ENCODE measurements at regions of chr17 and their contacts with region 1.

Region 1: GRCh38 chr17:44533533-44534246 is 23.6 kb upstream of the FZD2 start:
- DNase-seq: peak; percentile 73 to 92 (median 85)
- ATAC-seq: peak; percentile 93
- H3K4me3 ChIP-seq: no peak overlapping the region
- H3K4me3 Mint-ChIP-seq: no peak overlapping the region
- H3K27ac ChIP-seq: no peak overlapping the region
- H3K27ac Mint-ChIP-seq: no peak overlapping the region
- H3K4me1 ChIP-seq: peaks cover 8% of the 10 kb centered on the region
- H3K4me1 Mint-ChIP-seq: peaks cover 8% of the 10 kb centered on the region
- H3K27me3 ChIP-seq: no peaks in the 10 kb centered on the region
- H3K27me3 Mint-ChIP-seq: peaks cover 2% of the 10 kb centered on the region
- CTCF ChIP-seq: peak; percentile 93

Region 2: GRCh38 chr17:44522883-44523671 is 10.6 kb before region 1 on chr17:
- CTCF ChIA-PET with region 1: interaction called, 14 read pairs
- POLR2A ChIA-PET with region 1: no interaction called
- intact Hi-C with region 1: no loop called
- DNase-seq: peak in 7 of 9 experiments; percentile 20 to 58 (median 50)
- ATAC-seq: no peak
- H3K4me3 ChIP-seq: no peak overlapping the region
- H3K4me3 Mint-ChIP-seq: no peak overlapping the region
- H3K27ac ChIP-seq: no peak overlapping the region
- H3K27ac Mint-ChIP-seq: no peak overlapping the region
- H3K4me1 ChIP-seq: no peaks in the 10 kb centered on the region
- H3K4me1 Mint-ChIP-seq: no peaks in the 10 kb centered on the region
- H3K27me3 ChIP-seq: no peaks in the 10 kb centered on the region
- H3K27me3 Mint-ChIP-seq: peaks cover 16% of the 10 kb centered on the region
- CTCF ChIP-seq: no peak

Region 3: DNA sequence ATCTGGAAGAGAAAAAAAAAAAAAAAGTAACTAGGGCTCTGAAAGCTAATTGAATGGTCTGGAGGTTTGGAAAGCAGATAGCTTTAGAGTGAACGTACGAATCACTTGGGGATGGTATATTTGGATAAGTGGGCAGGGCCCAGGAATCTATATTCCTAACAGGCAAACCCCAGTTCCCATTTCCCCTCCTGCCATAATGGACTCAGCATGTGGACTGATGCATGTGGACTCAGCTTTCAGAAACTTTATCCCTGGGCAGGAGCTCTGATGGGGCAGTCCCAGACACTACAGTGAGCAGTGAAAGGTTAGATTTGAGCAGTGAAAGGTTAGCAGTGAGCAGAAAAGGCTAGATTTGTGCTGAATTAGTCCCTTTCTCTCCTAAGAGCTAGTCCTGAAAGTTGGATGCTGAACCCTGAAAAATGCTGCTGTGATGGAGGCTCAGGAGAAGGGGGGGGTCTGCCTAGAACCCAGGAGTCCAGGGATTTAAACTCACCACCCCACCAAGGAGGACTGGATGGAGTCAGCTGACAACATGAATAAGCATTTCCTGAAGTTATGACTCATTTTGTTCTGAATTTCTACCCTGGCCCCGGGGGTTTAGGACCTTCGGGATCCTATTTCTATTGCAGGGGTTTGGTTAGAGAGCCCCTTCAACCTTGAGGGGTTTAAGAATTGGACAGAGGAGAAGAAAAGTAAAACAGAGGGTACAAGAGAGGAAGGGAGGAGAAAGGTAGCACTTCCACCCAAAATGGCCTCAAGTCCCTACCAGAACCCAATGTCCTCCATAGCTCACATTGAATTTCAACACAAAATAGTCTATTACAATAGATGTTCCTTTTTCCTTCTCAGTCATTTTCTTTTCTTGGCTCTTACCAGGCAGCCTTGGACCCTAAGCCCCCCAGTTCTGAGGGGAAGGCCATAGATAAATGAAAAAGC is 13.2 kb after region 1 on chr17:
- CTCF ChIA-PET with region 1: interaction called, 13 read pairs
- POLR2A ChIA-PET with region 1: no interaction called
- intact Hi-C with region 1: no loop called
- DNase-seq: no peak
- ATAC-seq: no peak
- H3K4me3 ChIP-seq: no peak overlapping the region
- H3K4me3 Mint-ChIP-seq: no peak overlapping the region
- H3K27ac ChIP-seq: no peak overlapping the region
- H3K27ac Mint-ChIP-seq: no peak overlapping the region
- H3K4me1 ChIP-seq: no peaks in the 10 kb centered on the region
- H3K4me1 Mint-ChIP-seq: no peaks in the 10 kb centered on the region
- H3K27me3 ChIP-seq: peaks cover 0 to 4% of the 10 kb centered on the region in 2 experiments
- H3K27me3 Mint-ChIP-seq: peaks cover 46% of the 10 kb centered on the region
- CTCF ChIP-seq: no peak

Region 4: GRCh38 chr17:44636562-44636961 is 102.9 kb after region 1 on chr17:
- CTCF ChIA-PET with region 1: interaction called, 12 read pairs
- POLR2A ChIA-PET with region 1: interaction called, 5 read pairs
- intact Hi-C with region 1: loop called in 1 of 2 experiments (anchors 1 kb)
- DNase-seq: peak in 2 of 9 experiments; percentile 16 to 29
- ATAC-seq: no peak
- H3K4me3 ChIP-seq: no peak overlapping the region
- H3K4me3 Mint-ChIP-seq: no peak overlapping the region
- H3K27ac ChIP-seq: no peak overlapping the region
- H3K27ac Mint-ChIP-seq: no peak overlapping the region
- H3K4me1 ChIP-seq: no peaks in the 10 kb centered on the region
- H3K4me1 Mint-ChIP-seq: no peaks in the 10 kb centered on the region
- H3K27me3 ChIP-seq: peaks cover 0 to 5% of the 10 kb centered on the region in 2 experiments
- H3K27me3 Mint-ChIP-seq: peaks cover 15% of the 10 kb centered on the region
- CTCF ChIP-seq: no peak

Region 5: DNA sequence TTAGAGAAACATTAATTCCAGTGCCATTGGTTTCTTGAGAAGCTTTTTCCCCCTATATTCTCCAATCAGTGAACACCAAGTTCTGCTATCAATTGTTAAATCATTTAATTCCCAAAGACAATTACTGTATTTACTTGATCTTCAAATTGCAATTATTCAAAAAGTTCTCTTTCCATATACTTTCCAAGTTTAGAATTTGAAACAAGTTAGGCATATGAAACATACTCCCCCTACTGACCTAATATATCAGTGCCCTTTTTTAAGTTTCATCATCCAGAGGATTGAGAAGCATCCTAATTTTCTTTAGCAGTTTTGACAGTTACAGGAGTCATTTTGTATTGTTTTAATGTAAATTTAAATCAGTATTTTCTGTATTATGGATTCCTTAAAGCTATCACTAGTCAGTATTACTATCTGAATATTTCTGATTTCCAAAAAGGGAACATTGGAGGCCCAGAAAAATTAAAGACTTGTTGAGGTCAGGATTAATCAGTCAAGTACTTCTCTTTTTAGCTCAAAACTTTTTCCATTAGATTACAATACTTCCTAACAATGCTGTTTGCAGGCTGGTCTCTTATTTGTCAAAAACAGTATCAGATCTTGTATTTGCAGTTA is 138.9 kb after region 1 on chr17:
- CTCF ChIA-PET with region 1: interaction called, 26 read pairs
- POLR2A ChIA-PET with region 1: no interaction called
- intact Hi-C with region 1: loop called (anchors 1 kb)
- DNase-seq: peak in 1 of 9 experiments; percentile 17
- ATAC-seq: no peak
- H3K4me3 ChIP-seq: no peak overlapping the region
- H3K4me3 Mint-ChIP-seq: no peak overlapping the region
- H3K27ac ChIP-seq: no peak overlapping the region
- H3K27ac Mint-ChIP-seq: no peak overlapping the region
- H3K4me1 ChIP-seq: no peaks in the 10 kb centered on the region
- H3K4me1 Mint-ChIP-seq: no peaks in the 10 kb centered on the region
- H3K27me3 ChIP-seq: no peaks in the 10 kb centered on the region
- H3K27me3 Mint-ChIP-seq: no peaks in the 10 kb centered on the region
- CTCF ChIP-seq: peak; percentile 31

Region 6: DNA sequence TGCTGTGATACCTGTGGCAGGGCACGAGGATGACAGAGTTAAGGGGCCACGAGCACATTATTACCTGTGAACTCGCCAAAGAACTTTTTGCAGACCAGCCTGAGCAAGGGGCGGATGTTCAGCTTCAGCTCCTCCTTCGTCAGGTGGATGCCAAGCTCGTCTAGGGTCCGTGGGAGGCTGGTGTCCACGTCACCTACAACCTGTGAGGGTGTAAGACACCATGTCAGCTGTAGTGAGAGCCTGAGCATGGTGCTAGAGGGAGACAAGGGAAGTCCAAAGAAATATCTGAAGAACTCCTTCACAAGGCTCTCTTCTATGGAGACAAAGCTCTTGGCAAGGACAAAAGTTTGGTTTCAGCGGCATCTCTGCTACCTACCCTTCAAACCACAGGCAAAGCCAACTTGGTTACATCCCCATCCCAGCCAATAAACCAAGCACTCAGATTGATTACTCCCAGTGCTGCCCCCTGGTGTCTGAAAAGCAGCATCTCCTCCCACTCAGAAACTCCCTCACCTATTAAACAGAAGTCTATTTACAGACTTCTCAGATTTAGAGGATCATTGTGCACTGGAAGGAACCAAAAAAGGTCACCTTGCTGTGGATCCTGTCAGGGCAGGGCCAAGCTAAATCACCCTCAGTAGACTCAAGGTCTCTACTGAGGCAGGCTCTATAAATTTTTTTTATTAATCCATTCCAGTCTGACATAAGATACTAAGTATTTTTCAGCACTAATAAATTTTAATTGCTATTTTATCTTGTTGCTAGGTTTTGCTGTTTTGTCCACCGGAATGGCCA is 331.4 kb after region 1 on chr17:
- CTCF ChIA-PET with region 1: interaction called, 5 read pairs
- POLR2A ChIA-PET with region 1: no interaction called
- intact Hi-C with region 1: loop called (anchors 1 to 2 kb)
- DNase-seq: peak; percentile 26 to 82 (median 71)
- ATAC-seq: peak; percentile 83
- H3K4me3 ChIP-seq: no peak overlapping the region
- H3K4me3 Mint-ChIP-seq: no peak overlapping the region
- H3K27ac ChIP-seq: no peak overlapping the region
- H3K27ac Mint-ChIP-seq: no peak overlapping the region
- H3K4me1 ChIP-seq: no peaks in the 10 kb centered on the region
- H3K4me1 Mint-ChIP-seq: no peaks in the 10 kb centered on the region
- H3K27me3 ChIP-seq: no peaks in the 10 kb centered on the region
- H3K27me3 Mint-ChIP-seq: no peaks in the 10 kb centered on the region
- CTCF ChIP-seq: peak; percentile 82

Region 7: DNA sequence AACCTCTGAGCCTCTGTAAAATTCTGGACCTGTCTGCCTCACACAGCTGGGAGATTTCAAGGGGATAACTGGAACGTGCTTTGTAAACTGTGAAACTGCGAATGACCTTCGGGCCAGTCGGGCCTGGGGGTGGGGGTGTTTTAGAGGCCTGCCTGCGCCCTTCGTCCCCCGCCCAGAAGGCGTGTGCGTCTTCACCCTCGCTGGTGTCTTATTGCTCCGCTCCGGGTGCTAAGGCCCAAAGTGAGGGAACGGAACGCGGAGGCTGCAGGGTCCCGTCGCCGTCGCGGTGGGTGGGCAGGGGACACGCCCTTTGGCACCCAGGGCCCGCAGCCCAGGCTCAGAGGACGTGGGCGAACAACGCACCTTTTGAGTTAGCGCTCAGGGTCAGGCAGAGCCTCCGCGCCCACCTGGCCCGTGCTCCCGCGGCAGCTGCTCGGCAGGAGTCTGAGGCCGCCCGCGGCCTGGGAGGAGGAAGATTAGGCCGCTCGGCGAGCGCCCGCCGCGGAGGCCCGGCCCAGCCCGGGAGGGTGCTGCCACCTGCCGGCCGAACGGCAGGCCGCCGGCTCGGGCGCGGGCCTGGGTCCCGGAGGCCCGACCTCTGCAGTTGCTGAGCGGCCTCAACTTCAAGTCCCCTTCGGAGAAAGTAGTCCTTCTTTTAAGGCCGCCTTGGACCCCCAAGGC is 488.1 kb after region 1 on chr17:
- CTCF ChIA-PET with region 1: no interaction called
- POLR2A ChIA-PET with region 1: no interaction called
- intact Hi-C with region 1: loop called in 1 of 2 experiments (anchors 5 kb)
- DNase-seq: peak; percentile 35 to 82 (median 61)
- ATAC-seq: peak; percentile 87
- H3K4me3 ChIP-seq: peak overlapping the region; percentile 40 to 42
- H3K4me3 Mint-ChIP-seq: peak overlapping the region; percentile 59
- H3K27ac ChIP-seq: no peak overlapping the region
- H3K27ac Mint-ChIP-seq: no peak overlapping the region
- H3K4me1 ChIP-seq: peaks cover 20% of the 10 kb centered on the region
- H3K4me1 Mint-ChIP-seq: peaks cover 21% of the 10 kb centered on the region
- H3K27me3 ChIP-seq: peaks cover 20 to 21% of the 10 kb centered on the region in 2 experiments
- H3K27me3 Mint-ChIP-seq: peaks cover 37% of the 10 kb centered on the region
- CTCF ChIP-seq: peak; percentile 90